ENCODE measurements at regions of chr17 and their contacts with region 1.

Region 1: GRCh38 chr17:62968445-62968923 is 2.4 kb downstream of the TANC2 start:
- DNase-seq: peak in 1 of 5 donors; percentile 28
- H3K4me3 ChIP-seq: no peak overlapping the region
- H3K27ac ChIP-seq: no peak overlapping the region
- H3K4me1 ChIP-seq: no peaks in the 10 kb centered on the region
- H3K27me3 ChIP-seq: no peaks in the 10 kb centered on the region
- CTCF ChIP-seq: peak in 2 of 3 donors; percentile 61 to 70
- EP300 ChIP-seq: no peak
- POLR2A ChIP-seq: no peak

Region 2: GRCh38 chr17:62597935-62598334 is 370.5 kb before region 1 on chr17:
- intact Hi-C with region 1: loop called in 1 of 4 experiments (anchors 5 kb)
- DNase-seq: peak in 2 of 5 donors; percentile 28 to 50
- H3K4me3 ChIP-seq: no peak overlapping the region
- H3K27ac ChIP-seq: no peak overlapping the region
- H3K4me1 ChIP-seq: no peaks in the 10 kb centered on the region
- H3K27me3 ChIP-seq: no peaks in the 10 kb centered on the region
- CTCF ChIP-seq: no peak
- EP300 ChIP-seq: no peak
- POLR2A ChIP-seq: no peak

Region 3: GRCh38 chr17:62703775-62704378 is 264.6 kb before region 1 on chr17:
- intact Hi-C with region 1: loop called (anchors 5 to 10 kb)
- DNase-seq: peak; percentile 67 to 88 (median 79)
- H3K4me3 ChIP-seq: peak overlapping the region; percentile 46
- H3K27ac ChIP-seq: peak overlapping the region; percentile 18 to 39
- H3K4me1 ChIP-seq: peaks cover 12% of the 10 kb centered on the region
- H3K27me3 ChIP-seq: no peaks in the 10 kb centered on the region
- CTCF ChIP-seq: peak; percentile 68 to 88 (median 88)
- EP300 ChIP-seq: no peak
- POLR2A ChIP-seq: no peak

Region 4: DNA sequence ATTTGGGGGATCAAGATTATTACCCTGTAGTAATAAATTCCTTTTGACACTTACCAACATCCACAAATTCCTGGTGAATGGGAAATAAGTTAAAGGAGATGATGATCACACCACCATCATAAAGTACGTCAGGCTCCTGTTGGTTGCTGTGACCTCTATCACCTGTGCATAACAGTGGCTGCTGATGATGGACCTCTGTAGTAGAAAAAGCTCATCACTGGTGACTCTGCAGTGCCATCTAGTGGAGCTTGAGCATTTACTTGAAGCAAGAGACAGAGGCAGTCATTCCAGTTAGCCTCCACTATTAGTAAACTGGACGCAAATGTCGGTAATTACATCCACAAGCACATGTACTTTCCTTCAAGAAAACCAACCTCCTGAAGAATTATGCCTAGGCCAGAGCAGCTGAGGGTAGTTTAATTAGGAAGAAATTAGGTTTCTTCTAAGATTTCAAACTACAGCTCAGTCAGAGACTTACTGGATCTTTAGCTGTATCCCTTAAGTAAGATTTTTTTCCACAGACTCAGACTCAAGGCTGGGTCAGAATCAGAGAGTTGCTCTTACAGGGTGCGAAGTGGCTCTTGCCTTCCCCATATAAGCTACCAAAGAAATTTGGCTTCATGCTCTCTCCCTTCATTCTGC is 438.3 kb after region 1 on chr17:
- intact Hi-C with region 1: loop called in 1 of 4 experiments (anchors 10 kb)
- DNase-seq: peak in 4 of 5 donors; percentile 49 to 79 (median 70)
- H3K4me3 ChIP-seq: no peak overlapping the region
- H3K27ac ChIP-seq: no peak overlapping the region
- H3K4me1 ChIP-seq: peaks cover 4% of the 10 kb centered on the region
- H3K27me3 ChIP-seq: no peaks in the 10 kb centered on the region
- CTCF ChIP-seq: peak; percentile 66 to 84 (median 68)
- EP300 ChIP-seq: no peak
- POLR2A ChIP-seq: no peak

Measured in ovary (tissue), 10 donors.